CD4-positive, alpha-beta memory T cell (primary cell): ENCODE measurements at regions of chr18 and their contacts with region 1.

Region 1: DNA sequence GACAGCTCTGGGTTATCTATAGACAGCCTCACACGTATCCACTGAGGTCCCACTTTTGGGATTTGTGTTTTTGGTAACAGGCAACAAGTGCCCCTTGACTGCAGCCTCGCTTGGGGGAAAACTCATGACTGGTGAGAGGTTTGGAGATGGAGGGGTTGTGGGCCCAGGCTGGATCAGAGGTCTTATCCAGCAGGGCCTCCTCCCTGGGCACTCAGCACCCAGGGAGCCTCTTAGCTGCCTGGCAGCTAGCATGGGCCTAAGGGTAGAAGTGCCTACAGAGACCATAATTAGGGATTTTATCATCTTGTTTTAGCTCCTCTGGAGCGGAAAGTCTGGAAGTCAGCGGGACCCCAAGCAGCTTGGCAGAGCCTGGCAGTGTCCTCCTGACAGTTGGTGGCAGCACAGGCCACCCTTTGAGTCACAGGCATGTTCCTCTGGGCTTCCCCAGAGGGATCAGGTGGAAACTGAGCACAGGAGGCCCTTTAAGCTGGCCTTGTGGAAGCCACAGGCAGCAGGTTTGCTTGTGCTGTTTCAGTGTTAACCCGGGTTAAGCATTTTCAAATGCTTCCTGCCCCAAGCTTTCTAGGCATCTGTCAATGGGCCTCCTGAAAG is 143.1 kb downstream of the KCTD1 start:
- DNase-seq: no peak
- H3K4me3 ChIP-seq: no peak overlapping the region
- H3K4me3 Mint-ChIP-seq: no peak overlapping the region
- H3K27ac ChIP-seq: no peak overlapping the region
- H3K27ac Mint-ChIP-seq: no peak overlapping the region
- H3K4me1 ChIP-seq: no peaks in the 10 kb centered on the region
- H3K4me1 Mint-ChIP-seq: no peaks in the 10 kb centered on the region
- H3K27me3 ChIP-seq: no peaks in the 10 kb centered on the region
- H3K27me3 Mint-ChIP-seq: no peaks in the 10 kb centered on the region

Region 2: DNA sequence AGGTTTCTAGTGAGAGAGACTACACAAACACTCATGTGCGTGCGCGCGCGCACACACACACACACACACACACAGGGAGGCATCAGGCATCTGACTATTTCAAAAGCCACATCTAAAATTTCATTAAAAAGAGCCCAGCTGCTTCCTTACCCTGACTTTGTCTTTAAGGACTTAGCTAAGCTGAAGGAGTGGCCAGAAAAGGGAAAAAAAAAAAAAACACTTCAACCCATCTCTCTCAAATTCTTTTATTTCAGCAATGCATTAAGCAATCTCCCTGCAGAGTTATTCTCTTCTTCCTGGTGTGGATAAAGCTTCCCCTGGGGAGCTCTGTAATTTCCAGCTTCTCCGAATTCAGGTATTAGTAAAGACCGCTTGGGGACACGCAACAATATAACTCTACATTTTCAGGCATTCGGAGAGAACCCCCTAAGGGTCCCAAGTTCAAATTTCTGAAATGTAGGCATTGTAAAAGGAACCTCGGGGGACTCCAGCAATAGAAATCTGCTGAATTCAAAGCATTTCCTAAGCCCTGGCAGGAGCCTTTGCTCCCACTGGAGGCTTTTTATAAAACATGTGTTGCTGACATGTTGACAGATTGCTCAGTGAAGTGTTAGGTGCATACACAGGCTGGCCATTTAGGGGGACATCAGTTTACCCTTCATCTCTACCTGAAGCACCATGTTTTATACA is 1120.3 kb before region 1 on chr18:
- CTCF ChIA-PET with region 1: no interaction called
- POLR2A ChIA-PET with region 1: no interaction called
- intact Hi-C with region 1: loop called (anchors 5 kb)
- DNase-seq: no peak
- H3K4me3 ChIP-seq: no peak overlapping the region
- H3K4me3 Mint-ChIP-seq: no peak overlapping the region
- H3K27ac ChIP-seq: no peak overlapping the region
- H3K27ac Mint-ChIP-seq: no peak overlapping the region
- H3K4me1 ChIP-seq: no peaks in the 10 kb centered on the region
- H3K4me1 Mint-ChIP-seq: no peaks in the 10 kb centered on the region
- H3K27me3 ChIP-seq: no peaks in the 10 kb centered on the region
- H3K27me3 Mint-ChIP-seq: peaks cover 0 to 1% of the 10 kb centered on the region in 2 donors

Region 3: DNA sequence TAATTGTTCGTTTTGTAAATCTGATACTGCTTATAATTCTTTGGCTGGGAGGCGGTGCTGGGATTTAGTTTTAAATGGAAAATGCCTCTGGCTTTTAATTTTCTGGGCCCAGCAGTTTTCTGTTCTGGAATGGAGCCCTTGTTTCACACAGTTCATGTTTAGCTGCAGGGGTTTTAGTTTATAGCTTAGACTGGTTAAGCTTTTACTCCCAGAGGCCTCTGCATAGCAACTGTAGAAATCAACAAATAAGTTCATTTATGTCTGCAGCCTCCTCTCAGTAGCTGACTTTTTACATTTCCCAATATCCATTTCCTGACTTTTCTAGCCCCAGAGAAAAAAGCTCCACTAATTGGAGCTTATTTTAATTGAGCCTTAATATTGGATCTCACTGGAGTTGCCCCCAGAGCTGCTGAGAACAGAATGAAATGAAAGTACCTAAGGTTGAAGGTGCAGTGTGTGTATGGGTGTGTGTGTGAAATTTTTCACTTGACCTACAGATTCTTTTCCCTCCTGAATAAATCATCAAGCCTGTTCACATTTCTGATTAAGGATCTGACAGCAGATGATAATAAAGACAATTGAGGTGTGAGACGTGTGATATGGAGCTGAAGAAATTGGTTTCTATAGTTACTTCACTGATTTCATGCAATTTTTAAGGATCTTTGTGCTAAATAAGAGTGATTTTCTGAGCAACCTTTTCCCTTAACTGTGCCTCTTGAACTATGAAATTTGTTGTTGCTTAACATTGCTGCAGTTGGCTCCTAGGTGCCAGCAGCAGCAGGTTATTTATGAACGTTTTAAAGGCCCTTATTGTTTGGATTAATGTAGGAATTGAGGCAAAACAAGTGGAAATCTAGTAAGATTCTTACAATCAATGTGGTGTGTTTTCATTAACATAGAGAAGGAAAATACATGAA is 69.5 kb before region 1 on chr18:
- CTCF ChIA-PET with region 1: no interaction called
- POLR2A ChIA-PET with region 1: no interaction called
- intact Hi-C with region 1: no loop called
- DNase-seq: no peak
- H3K4me3 ChIP-seq: no peak overlapping the region
- H3K4me3 Mint-ChIP-seq: no peak overlapping the region
- H3K27ac ChIP-seq: no peak overlapping the region
- H3K27ac Mint-ChIP-seq: peak overlapping the region in 4 of 7 donors; percentile 3 to 48 (median 16)
- H3K4me1 ChIP-seq: no peaks in the 10 kb centered on the region
- H3K4me1 Mint-ChIP-seq: no peaks in the 10 kb centered on the region
- H3K27me3 ChIP-seq: no peaks in the 10 kb centered on the region
- H3K27me3 Mint-ChIP-seq: no peaks in the 10 kb centered on the region